ENCODE measurements at regions of chr17 and their contacts with region 1.

Region 1: GRCh38 chr17:63447437-63448009 is 1.4 kb upstream of the CYB561 start:
- DNase-seq: no peak
- H3K4me3 ChIP-seq: no peak overlapping the region
- H3K27ac ChIP-seq: no peak overlapping the region
- H3K27me3 ChIP-seq: no peaks in the 10 kb centered on the region
- CTCF ChIP-seq: no peak

Region 2: GRCh38 chr17:63434876-63435684 is 12.4 kb before region 1 on chr17:
- CTCF ChIA-PET with region 1: interaction called, 3 read pairs
- POLR2A ChIA-PET with region 1: interaction called, 13 read pairs
- DNase-seq: no peak
- H3K4me3 ChIP-seq: no peak overlapping the region
- H3K27ac ChIP-seq: no peak overlapping the region
- H3K27me3 ChIP-seq: no peaks in the 10 kb centered on the region
- CTCF ChIP-seq: 0 out of 2 replicates have a peak, but pooled peaks have one; percentile 4